RWPE1 (cell line): ENCODE measurements at regions of chr5 and their contacts with region 1.

Region 1: GRCh38 chr5:126354012-126354857 is 69.0 kb upstream of the GRAMD2B start:
- DNase-seq: peak; percentile 90
- H3K27ac ChIP-seq: no peak overlapping the region
- CTCF ChIP-seq: peak; percentile 72

Region 2: DNA sequence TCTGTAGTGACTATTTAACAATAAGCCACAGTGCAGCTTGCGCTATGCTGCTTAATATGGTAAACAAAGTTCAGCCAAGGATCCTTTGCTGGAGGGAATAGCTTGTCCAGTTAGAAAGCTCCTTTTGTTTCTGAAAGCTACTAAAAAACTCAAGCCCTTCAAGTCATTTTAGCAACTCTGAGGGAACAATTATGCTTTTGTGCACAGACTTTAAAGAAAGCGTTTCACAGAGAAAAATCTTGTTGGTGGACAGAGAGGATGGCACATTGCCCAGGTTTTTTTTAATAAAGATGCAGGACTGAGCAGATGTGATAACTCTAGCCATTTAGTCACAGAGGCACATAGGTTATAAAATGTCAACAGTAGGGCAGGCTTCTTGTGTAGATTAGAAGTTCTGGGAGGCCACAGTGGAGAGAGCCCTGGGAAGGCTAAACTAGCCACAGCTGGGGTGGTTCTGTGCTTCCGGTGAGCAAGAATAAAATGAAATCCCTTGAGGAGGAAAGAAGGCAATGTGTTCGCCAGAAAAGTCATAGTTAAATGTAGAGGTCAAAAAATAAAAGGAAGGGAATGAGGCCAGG is 177.4 kb after region 1 on chr5:
- CTCF ChIA-PET with region 1: interaction called, 13 read pairs
- POLR2A ChIA-PET with region 1: no interaction called
- DNase-seq: no peak
- H3K27ac ChIP-seq: no peak overlapping the region
- CTCF ChIP-seq: no peak